Panc1 (cell line): ENCODE measurements at regions of chr7 and their contacts with region 1.

Region 1: DNA sequence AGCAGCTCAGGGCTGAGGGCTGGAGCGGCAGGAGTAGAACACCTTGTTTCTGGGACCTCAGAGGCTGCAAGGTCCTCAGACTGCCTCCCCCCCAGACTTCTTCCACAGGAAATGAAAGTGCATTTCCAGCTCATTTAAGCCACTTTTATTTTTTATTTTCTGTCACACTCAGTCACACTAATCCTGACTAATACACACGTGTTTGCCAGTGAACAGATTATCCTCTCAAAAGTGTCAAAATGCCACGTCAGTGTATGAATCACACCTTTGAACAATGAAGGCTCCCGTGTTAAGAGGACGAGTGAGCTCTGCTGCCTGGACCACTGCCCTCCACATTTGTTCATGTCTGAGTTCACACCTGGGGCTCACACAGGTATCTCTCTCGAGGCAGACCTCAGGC is 488.5 kb downstream of the DNAJB6 start:
- DNase-seq: no peak
- ATAC-seq: no peak; the same call in 1 of the 2 replicates
- H3K4me3 ChIP-seq: no peak overlapping the region
- H3K27ac ChIP-seq: no peak overlapping the region
- H3K4me1 ChIP-seq: no peaks in the 10 kb centered on the region
- H3K27me3 ChIP-seq: peaks cover 4% of the 10 kb centered on the region
- CTCF ChIP-seq: no peak

Region 2: DNA sequence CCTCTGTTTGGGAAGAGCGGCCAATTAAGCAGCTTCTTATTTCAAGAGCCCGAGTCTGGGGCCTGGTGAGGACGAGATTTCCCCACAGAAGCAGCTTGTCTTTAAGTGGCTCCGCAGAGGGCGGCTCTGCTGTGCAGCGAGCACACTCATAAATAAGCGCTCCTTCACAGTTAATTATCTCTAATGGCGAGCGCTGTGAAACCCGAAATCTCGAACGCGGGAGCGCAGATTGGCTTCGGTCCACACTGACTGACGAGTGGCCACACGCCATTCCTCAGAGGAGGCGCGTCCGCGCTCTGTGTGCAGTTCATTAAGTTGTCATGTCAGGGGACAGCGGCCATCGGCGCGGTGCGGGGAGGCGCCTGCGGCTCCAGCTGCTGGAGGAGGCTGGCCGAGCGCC is 72.4 kb after region 1 on chr7:
- CTCF ChIA-PET with region 1: no interaction called
- POLR2A ChIA-PET with region 1: no interaction called
- in situ Hi-C with region 1: no loop called
- intact Hi-C with region 1: loop called (anchors 2 kb)
- DNase-seq: no peak
- ATAC-seq: no peak
- H3K4me3 ChIP-seq: no peak overlapping the region
- H3K27ac ChIP-seq: no peak overlapping the region
- H3K4me1 ChIP-seq: no peaks in the 10 kb centered on the region
- H3K27me3 ChIP-seq: peaks cover 7% of the 10 kb centered on the region
- CTCF ChIP-seq: no peak